Dorsolateral prefrontal cortex (tissue), 120 donors: ENCODE measurements at regions of chr16 and their contacts with region 1.

Region 1: GRCh38 chr16:15548482-15548891 is 94.5 kb downstream of the MARF1 start:
- DNase-seq: no peak
- H3K4me3 ChIP-seq: no peak overlapping the region
- H3K27ac ChIP-seq: peak overlapping the region in 6 of 59 donors; percentile 2 to 56 (median 23)
- H3K27me3 ChIP-seq: no peaks in the 10 kb centered on the region
- CTCF ChIP-seq: no peak

Region 2: GRCh38 chr16:15523092-15523541 is 25.4 kb before region 1 on chr16:
- intact Hi-C with region 1: loop called (anchors 2 kb)
- DNase-seq: peak; percentile 11 to 73 (median 58)
- H3K4me3 ChIP-seq: peak overlapping the region in 1 of 59 donors; percentile 3
- H3K27ac ChIP-seq: peak overlapping the region in 45 of 59 donors; percentile 2 to 80 (median 43)
- H3K27me3 ChIP-seq: no peaks in the 10 kb centered on the region
- CTCF ChIP-seq: peak in 54 of 56 donors; percentile 23 to 78 (median 54)